ENCODE measurements at regions of chr5 and their contacts with region 1.

Region 1: GRCh38 chr5:132489871-132490485 is 595 bp downstream of the IRF1 start:
- DNase-seq: peak; percentile 83
- ATAC-seq: peak; percentile 28

Region 2: DNA sequence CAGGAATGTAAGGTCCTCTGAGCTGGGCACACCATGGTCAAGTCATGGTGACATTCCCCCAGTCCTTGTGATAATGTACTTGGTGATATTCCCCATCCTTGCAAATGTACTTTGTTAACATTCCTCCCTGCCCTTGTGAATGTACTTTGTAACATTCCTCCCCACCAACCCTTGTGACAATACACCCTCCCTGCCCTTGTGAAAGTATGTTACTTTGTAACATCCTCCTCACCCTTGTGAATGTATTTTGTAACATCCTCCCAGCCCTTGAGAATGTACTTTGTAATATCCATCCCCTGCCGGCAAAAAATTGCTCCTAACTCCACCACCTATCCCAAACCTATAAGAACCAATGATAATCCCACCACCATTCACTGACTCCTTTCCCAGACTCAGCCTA is 908.3 kb before region 1 on chr5:
- intact Hi-C with region 1: no loop called
- DNase-seq: no peak
- ATAC-seq: no peak

Region 3: DNA sequence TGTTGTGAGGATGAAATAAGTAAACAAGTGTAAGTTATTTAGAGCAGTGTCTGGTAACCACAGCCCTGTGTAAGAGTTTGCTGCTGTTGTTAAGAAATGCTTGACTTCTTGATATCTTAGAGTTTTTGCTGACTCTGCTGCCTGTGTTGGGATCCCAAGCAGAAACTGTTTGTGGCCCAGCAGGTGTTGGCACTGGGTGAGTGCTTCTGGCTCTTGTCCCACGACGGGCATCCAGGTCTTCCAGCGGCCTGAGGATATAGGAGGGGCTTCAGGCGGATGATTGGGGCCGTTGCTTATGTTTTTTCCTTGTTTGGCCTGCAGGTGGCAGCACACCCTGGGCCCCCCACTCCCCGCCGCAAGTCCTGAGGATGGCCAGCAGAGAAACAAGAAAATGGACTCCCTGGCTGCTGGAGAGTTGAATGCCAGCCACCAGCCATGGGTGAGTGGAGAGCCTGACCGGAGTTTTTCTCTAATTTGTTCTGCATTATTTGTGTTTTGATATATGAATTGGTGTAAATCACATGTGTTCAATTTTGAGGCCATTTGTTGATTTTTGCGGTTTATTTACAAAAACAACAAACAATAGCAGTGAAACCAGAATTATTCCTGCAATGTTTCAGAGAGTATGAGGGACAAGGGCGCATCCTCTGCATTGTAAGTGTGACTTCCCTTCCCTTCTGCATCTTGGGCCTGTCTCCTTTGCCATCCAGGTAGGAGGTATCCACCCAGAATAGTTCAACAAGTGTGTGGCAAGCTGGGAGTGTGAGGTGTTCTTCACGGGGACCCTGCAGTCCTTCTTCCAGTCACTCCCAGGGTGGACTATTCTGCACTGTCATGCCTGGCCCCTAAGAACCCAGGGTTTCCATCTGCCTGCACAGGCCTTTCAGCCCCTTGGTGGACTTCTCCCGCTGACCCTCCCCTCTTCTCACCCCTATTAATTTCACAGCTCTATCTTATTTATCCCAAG is 70.2 kb before region 1 on chr5:
- intact Hi-C with region 1: loop called (anchors 10 kb)
- DNase-seq: peak; percentile 82
- ATAC-seq: peak; percentile 87